ENCODE measurements at regions of chr12 and their contacts with region 1.

Region 1: DNA sequence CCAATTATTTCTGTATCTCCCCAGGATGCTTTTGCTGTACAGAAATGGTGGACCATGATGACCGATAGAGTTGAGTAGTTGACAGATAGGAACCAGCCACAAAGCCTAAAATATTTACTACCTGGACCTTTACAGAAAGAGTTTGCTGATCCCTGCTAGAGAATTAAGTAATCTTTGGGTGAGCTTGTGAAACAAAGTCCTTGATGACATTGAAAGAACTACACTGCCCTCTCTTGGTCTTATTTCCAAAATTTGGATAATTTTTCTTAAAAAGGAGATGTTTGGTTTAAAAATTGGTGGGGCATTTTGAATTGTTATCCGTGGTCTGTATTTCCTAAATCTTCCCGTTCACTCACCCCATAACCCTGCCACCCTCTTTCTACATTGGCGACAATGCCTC is 13.7 kb upstream of the TCTN1 start:
- DNase-seq: no peak
- H3K4me3 ChIP-seq: no peak overlapping the region
- CTCF ChIP-seq: peak; percentile 5

Region 2: DNA sequence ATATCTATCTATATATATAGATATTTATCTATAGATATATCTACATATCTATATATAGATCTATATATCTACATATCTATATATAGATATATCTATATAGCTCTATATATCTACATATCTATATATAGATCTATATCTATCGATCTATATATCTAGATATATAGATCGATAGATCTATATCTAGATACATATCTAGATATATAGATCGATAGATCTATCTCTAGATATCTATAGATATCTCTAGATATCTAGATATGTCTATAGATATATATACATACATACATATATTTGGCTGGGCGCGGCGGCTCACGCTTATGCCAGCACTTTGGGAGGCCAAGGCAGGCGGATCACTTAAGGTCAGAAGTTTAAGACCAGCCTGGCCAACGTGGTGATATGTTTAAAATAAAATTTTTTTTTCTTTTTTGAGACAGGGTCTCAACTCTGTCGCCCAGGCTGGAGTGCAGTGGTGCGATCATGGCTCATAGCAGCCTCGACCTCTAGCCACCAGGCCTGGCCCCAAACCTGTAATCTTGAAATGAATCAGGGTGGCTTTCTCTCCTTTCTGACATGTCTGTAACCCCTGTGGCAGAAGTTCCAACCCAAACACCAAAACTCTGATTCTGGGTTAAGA is 168.2 kb before region 1 on chr12:
- CTCF ChIA-PET with region 1: interaction called, 12 read pairs
- POLR2A ChIA-PET with region 1: no interaction called
- DNase-seq: no peak
- H3K4me3 ChIP-seq: no peak overlapping the region
- CTCF ChIP-seq: no peak

Region 3: DNA sequence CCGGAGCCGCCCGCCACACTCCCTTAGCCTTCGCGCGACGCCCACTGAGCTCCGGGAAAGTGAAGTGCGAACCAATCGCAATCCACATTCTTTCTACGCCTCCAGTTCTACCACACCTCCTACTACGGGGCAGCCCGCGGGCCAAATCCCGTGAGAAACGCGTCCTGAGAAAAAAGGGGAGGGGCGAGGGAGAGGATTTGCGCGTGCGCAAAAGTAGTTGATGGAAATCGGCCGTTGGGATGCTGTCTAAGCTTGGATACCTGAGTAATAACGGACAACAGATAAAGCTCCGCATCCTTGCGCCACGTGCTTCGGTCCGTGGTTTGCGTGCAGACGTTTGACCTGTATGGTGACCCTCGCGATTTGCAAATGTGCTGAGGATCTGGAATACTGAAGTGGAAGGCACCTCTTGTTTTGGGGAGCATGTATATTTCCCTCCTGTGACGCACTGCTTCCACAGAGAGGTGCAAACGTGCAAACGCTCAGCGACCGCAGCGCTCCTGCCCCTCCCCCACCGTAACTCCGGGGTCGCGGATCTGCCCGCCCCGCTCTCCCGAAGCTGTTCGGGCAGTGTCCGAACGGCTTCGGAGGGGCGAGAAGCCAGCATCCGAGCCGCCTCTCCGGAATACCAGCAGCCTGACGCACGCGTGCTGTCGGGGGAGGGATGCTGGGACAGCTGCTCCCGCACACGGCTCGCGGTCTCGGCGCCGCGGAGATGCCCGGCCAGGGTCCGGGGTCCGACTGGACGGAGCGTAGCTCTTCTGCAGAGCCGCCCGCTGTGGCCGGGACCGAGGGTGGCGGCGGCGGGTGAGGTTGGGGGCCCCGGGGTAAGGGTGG is 131.8 kb before region 1 on chr12 and contains the starts of genes FAM216A and GPN3:
- CTCF ChIA-PET with region 1: interaction called, 179 read pairs
- POLR2A ChIA-PET with region 1: no interaction called
- DNase-seq: peak; percentile 86
- H3K4me3 ChIP-seq: peak within 1 kb of the TSS; percentile 86
- CTCF ChIP-seq: no peak

Region 4: GRCh38 chr12:110531741-110532333 is 68.4 kb before region 1 on chr12:
- CTCF ChIA-PET with region 1: interaction called, 85 read pairs
- POLR2A ChIA-PET with region 1: no interaction called
- DNase-seq: no peak
- H3K4me3 ChIP-seq: no peak overlapping the region
- CTCF ChIP-seq: no peak

Region 5: DNA sequence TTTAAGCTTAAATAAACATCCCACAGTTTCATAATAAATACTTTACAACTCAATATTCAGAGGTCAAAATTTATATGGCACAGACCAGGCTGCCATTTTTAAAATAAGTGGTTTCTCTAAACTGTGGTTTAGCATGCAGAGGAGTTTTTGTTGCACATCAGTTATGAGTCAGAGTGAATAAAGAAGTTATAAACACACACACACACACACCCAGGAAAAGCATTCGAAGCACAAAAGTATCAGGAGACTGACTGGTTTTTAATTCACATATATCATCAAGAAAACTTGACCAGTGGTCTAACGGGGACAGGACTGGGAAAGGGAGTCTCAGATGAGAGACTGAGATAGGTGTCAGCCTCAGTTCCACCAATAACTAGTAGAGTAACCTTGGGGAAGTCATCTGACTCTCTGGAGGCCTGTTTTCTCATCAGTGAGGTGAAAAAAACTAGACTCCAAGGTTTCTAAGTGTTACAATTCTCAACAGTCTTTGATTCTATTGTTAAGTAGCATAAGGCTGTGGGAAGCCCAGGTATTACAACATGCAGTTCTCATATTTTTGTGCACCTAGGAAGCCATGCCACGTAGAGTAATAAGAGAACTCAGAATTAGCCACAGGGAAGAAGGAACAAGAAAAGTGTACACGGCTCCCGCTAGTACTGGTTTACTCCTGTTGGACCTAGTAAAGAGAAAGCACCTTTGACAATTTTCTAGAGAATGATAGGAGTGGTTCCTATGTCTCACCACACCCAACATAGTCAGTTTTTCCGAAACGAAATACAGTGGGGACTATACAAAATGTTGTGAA is 22.3 kb before region 1 on chr12:
- CTCF ChIA-PET with region 1: interaction called, 23 read pairs
- POLR2A ChIA-PET with region 1: no interaction called
- DNase-seq: no peak
- H3K4me3 ChIP-seq: peak overlapping the region; percentile 32
- CTCF ChIP-seq: no peak

Region 6: DNA sequence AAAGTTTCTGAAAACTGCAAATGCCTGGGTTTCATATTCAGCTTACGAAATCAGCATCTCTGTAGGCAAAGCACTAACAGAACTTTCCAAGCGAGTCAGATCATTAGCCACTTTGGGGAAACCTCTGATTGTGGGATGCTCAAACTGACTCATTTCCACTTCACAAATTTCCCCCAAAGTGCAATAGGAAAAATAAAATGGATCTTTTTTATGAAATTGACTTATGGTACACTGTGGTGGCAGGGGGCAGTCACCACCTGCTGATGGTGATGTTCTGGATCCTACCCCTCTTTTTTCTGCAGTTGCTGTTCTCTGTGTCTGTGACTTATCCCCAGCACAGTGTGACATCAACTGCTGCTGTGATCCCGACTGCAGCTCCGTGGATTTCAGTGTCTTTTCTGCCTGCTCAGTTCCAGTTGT is 19.3 kb after region 1 on chr12:
- CTCF ChIA-PET with region 1: interaction called, 88 read pairs
- POLR2A ChIA-PET with region 1: no interaction called
- DNase-seq: no peak
- H3K4me3 ChIP-seq: no peak overlapping the region
- CTCF ChIP-seq: no peak

Region 7: DNA sequence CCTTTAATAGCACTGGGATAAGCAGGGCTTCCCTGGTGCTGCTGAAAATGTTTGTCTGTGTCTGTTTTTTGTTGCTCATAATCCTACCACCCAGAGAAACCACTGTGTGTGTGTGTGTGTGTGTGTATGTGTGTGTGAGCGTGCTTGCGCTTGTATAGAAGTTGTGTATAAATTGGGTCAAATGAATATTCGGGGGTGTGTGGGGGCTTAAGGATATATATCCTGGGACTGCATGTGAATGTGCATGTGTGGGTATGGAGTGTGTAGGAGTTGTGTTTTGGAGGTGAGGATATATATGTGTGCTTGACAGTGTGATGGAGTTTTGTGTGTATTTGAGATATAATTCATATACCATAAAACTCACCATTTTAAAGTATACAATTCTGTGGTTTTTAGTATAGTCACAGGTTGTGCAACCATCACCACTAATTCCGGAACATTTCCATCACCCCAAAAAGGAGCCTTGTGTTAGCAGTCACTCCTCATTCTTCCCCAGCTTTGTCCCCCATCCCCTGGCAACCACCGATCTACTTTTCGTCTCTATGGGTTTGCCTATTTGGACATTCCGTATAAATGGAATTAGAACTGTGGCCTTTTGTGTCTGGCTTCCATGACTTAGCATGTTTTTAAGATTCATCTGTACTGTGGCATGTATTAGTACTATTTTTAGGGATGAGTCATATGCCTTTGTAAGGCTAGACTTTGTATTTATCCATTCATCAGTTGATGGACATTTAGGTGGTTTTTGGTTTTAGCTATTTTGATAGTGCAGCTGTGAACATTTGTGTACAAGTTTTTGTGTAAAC is 39.3 kb after region 1 on chr12:
- CTCF ChIA-PET with region 1: no interaction called
- POLR2A ChIA-PET with region 1: no interaction called
- DNase-seq: peak; percentile 23
- H3K4me3 ChIP-seq: no peak overlapping the region
- CTCF ChIP-seq: no peak

Measured in AG04449 (cell line).